ENCODE measurements at regions of chr11 and their contacts with region 1.

Region 1: DNA sequence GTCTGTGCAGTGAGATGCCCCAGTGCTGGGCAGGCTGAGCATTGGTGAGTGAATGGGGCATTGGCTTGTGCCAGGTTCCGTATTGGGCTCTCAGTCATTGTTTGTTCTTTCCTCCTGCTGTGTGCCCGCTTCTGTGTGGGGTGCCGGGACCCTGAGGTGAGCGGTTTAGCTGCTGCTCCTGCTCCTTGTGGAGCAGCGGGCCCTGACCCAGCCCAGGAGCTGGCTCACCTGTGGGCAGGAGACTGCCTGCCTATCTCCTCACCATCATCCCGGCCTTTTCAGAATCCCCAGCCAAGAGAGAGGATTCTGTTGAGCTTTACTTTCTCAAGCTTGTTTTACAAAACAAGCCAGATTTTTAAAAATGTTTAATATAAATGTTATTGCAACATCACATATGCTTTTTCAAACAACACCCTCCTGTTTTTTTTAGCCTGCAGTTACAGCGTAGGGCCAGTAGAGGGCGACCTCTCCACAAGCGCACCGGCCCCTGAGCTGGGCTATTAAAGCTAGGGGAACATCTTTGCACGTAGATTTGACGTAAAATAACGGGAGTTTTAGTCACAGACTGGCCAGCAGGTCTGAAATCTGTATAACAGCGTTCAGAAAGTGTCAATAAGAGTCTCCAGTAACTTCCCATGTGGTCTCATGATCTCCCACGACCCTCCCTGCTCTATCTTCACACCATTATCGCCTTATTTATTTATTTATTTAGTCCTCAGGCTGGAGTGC is 25.1 kb upstream of the RELT start:
- DNase-seq: peak; percentile 87
- H3K4me3 ChIP-seq: no peak overlapping the region
- H3K27ac ChIP-seq: no peak overlapping the region
- H3K4me1 ChIP-seq: no peaks in the 10 kb centered on the region
- H3K27me3 ChIP-seq: no peaks in the 10 kb centered on the region
- CTCF ChIP-seq: peak; percentile 100

Region 2: GRCh38 chr11:73383249-73384124 is 32.4 kb after region 1 on chr11:
- CTCF ChIA-PET with region 1: no interaction called
- POLR2A ChIA-PET with region 1: no interaction called
- intact Hi-C with region 1: no loop called
- DNase-seq: peak; percentile 48
- H3K4me3 ChIP-seq: no peak overlapping the region
- H3K27ac ChIP-seq: peak overlapping the region; percentile 45
- H3K4me1 ChIP-seq: peaks cover 55% of the 10 kb centered on the region
- H3K27me3 ChIP-seq: no peaks in the 10 kb centered on the region
- CTCF ChIP-seq: 0 out of 2 replicates have a peak, but pooled peaks have one; percentile 16

Region 3: GRCh38 chr11:73393479-73394380 is 42.7 kb after region 1 on chr11:
- CTCF ChIA-PET with region 1: interaction called, 28 read pairs
- POLR2A ChIA-PET with region 1: no interaction called
- intact Hi-C with region 1: loop called (anchors 1 kb)
- DNase-seq: peak; percentile 88
- H3K4me3 ChIP-seq: no peak overlapping the region
- H3K27ac ChIP-seq: no peak overlapping the region
- H3K4me1 ChIP-seq: peaks cover 11% of the 10 kb centered on the region
- H3K27me3 ChIP-seq: no peaks in the 10 kb centered on the region
- CTCF ChIP-seq: peak; percentile 94

Measured in A673 (cell line).